ENCODE measurements at regions of chr19 and their contacts with region 1.

Region 1: DNA sequence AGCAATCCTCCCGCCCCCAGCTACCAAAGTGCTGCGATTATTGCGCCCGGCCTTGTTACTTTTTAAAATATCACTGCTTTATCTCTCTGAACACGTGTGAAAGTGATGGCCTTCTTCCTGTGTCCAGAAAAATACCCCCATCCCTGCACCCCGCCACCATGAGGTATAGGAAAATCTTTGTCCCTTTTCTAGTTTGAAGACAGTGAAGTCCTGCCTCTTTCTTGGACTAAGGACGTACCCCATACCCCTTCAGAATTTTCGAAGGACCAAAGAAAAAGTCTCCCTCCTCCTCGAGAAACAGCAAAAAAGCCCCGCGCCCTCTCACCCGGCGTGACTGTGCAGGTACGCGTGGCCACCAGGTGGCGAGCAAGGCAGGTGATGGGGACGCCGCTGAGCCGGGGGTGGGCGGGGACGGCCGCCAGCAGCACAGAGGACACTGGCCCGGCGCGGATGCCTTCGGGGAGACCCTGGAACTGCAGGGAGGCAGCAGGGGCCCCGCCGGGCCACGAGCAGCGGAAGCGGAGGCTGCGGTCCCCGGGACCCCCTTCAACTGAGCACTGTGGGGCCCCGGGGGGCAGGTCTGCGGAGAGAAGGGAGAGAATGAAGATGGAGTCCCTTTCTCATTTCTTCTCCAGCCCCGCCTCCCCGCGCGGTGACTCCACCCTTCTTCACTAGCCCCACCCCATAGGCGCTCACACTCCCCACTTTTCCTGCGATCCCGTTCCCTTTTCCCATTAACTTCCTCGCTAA is 3.2 kb downstream of the VSIG10L start:
- DNase-seq: peak; percentile 88 to 95 (median 93)
- ATAC-seq: peak; percentile 78 to 83
- H3K4me3 ChIP-seq: peak overlapping the region; percentile 62
- H3K27ac ChIP-seq: no peak overlapping the region
- H3K4me1 ChIP-seq: no peaks in the 10 kb centered on the region
- H3K27me3 ChIP-seq: no peaks in the 10 kb centered on the region

Region 2: GRCh38 chr19:51366389-51367254 is 27.9 kb after region 1 on chr19:
- intact Hi-C with region 1: loop called in 1 of 4 experiments (anchors 1 kb)
- DNase-seq: peak; percentile 99
- ATAC-seq: peak; percentile 85 to 88
- H3K4me3 ChIP-seq: peak overlapping the region; percentile 78
- H3K27ac ChIP-seq: peak overlapping the region; percentile 97
- H3K4me1 ChIP-seq: peaks cover 10% of the 10 kb centered on the region
- H3K27me3 ChIP-seq: no peaks in the 10 kb centered on the region

Region 3: DNA sequence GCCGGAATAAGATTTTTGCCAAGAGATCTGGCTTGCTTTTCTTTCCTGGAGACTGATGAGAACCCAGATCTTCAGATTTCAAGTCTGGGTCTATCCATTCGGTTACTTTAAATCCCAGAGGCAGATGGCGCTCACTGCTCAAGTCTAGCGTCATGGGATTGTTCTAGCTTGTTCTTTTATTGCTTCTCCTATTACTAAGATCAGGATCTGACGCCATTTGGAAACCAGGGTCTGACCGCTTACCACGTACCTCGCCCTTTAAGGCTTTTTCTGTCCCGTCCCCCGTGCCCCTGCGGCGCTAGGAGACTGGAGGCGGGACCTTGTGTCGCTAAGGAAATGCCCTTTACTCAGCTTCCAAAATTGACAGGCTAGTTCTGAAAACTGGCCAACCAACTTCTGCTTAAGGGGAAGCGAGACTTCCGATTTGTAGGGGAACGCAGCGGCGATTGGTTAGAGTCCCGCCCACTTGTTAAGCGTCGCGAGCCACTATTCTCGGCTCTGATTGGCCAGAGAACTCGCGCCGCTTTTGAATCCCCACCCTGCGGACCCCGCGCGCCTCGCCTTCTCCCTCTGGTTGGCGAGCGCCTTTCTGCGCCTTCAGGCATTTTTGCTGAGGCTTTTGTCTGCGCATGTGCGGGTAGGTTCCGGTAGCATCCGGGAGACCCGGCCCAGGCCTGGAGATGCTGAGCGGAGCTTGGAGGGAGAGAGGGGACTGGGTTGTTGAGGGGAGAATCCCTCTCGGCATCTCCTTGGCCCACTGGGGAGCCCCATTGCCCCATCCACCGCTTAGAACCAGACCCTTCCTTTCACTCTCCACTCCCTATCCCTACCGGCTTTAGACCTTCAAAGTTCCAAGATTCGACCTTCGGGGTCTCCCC is 55.5 kb after region 1 on chr19:
- intact Hi-C with region 1: loop called in 1 of 4 experiments (anchors 10 kb)
- DNase-seq: peak; percentile 94 to 96 (median 95)
- ATAC-seq: peak; percentile 97 to 98
- H3K4me3 ChIP-seq: peak overlapping the region; percentile 36
- H3K27ac ChIP-seq: peak overlapping the region; percentile 55
- H3K4me1 ChIP-seq: no peaks in the 10 kb centered on the region
- H3K27me3 ChIP-seq: no peaks in the 10 kb centered on the region

Region 4: DNA sequence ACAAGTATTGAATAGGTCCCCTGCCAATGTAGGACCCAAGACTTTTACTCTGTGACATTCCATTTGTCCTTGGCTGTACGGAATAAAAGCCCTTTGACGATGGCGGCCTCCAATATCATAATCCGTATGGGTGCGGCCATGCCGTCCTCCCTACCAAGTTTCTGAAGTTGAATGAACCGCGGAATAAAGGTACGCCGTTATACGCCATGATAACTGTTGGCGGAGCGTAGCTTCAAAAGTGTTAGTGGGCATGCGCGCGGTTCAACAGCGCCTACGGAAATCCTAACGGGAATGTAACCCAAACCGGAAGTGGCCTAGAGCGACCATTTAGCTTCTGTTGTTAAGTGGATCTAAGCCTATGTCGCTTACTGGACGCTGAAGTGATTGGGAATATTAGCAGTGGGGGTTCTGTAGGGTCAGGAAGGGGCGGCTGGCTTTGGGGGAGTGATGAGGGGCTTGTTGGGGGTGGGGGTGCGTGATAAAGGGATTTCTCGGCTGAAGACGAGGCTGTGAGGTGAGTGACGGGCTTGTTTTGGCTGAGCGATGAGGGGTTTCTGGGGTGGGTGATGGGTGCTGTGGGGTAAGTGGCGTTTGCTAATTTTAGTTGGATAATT is 232.3 kb after region 1 on chr19 and contains the start of gene ZNF175:
- intact Hi-C with region 1: no loop called
- DNase-seq: peak; percentile 96 to 97 (median 96)
- ATAC-seq: peak; percentile 99
- H3K4me3 ChIP-seq: peak within 1 kb of the TSS; percentile 90
- H3K27ac ChIP-seq: peak within 1 kb of the TSS; percentile 52
- H3K4me1 ChIP-seq: peaks cover 6% of the 10 kb centered on the region
- H3K27me3 ChIP-seq: no peaks in the 10 kb centered on the region
- total RNA-seq, gene ZNF175: 8.7 to 12.4 (median 10.1) TPM

Region 5: GRCh38 chr19:51651216-51651846 is 312.6 kb after region 1 on chr19:
- intact Hi-C with region 1: loop called in 1 of 4 experiments (anchors 10 kb)
- DNase-seq: peak in 1 of 3 donors; percentile 63
- ATAC-seq: peak; percentile 52 to 54
- H3K4me3 ChIP-seq: no peak overlapping the region
- H3K27ac ChIP-seq: no peak overlapping the region
- H3K4me1 ChIP-seq: no peaks in the 10 kb centered on the region
- H3K27me3 ChIP-seq: no peaks in the 10 kb centered on the region